Aorta (tissue), 5 donors: ENCODE measurements at regions of chr1 and their contacts with region 1.

Region 1: DNA sequence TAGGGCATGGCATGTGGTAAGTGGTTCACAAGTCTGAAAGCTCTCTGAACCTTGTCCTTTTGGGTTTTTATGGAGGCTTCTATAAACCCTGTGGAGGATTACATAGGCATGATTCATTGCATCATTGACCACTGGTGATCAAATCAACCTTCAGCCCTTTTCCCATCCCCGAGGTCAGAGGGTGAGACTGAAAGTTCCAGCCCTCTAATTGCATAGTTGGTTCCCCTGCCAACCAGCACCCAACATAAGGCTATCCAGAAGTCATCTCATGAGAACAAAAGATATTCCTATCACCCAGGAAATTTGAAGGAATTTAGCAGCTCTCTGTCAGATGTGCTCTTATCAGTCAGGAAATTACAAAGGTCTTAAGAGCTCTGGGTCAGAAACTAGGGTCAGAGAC is 89.5 kb upstream of the ARTN start:
- DNase-seq: no peak
- ATAC-seq: no peak
- H3K4me3 ChIP-seq: no peak overlapping the region
- H3K27ac ChIP-seq: no peak overlapping the region
- H3K4me1 ChIP-seq: no peaks in the 10 kb centered on the region
- H3K27me3 ChIP-seq: no peaks in the 10 kb centered on the region

Region 2: GRCh38 chr1:43924516-43924915 is 80.4 kb after region 1 on chr1:
- intact Hi-C with region 1: loop called in 1 of 2 experiments (anchors 10 kb)
- DNase-seq: no peak
- ATAC-seq: no peak
- H3K4me3 ChIP-seq: no peak overlapping the region
- H3K27ac ChIP-seq: no peak overlapping the region
- H3K4me1 ChIP-seq: no peaks in the 10 kb centered on the region
- H3K27me3 ChIP-seq: no peaks in the 10 kb centered on the region